Panc1 (cell line): ENCODE measurements at regions of chr2 and their contacts with region 1.

Region 1: DNA sequence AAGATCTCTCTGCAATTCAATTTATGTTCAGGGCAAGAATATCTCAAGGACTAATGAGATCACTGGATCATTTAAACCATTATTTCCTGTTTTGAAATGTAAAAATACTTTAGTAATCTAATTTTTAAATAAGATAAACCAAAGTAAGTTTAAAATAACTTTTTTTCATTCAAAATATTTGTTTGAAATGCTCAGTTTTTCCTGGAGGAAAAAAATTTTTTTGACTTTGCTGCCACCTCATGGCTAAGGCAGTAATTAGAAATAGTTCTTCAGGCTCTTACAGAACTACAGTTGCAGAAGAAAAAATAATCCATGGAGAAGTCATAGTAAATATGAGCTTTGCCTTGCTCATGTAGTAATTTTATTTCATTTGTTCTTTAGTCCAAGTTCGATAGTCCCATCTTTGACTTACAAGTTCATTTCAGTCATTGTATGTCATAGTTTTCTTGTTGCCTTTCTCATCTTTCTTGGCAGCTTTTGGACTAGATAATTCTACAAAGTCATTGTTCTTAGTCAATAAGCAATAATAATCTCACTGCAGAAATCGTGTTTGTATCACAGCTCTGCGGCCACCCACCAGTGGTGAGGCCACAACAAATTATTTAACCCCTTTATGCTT is 127.4 kb downstream of the DPP4 start:
- DNase-seq: peak; percentile 25
- ATAC-seq: no peak
- H3K4me3 ChIP-seq: no peak overlapping the region
- H3K27ac ChIP-seq: no peak overlapping the region
- H3K4me1 ChIP-seq: no peaks in the 10 kb centered on the region
- H3K27me3 ChIP-seq: no peaks in the 10 kb centered on the region; the same call in 1 of the 2 replicates
- CTCF ChIP-seq: peak; percentile 52; the same call in 1 of the 2 replicates

Region 2: GRCh38 chr2:161250864-161251436 is 695.6 kb before region 1 on chr2:
- CTCF ChIA-PET with region 1: no interaction called
- POLR2A ChIA-PET with region 1: no interaction called
- in situ Hi-C with region 1: no loop called
- intact Hi-C with region 1: loop called (anchors 2 kb)
- DNase-seq: peak; percentile 45
- ATAC-seq: peak; percentile 96
- H3K4me3 ChIP-seq: no peak overlapping the region
- H3K27ac ChIP-seq: no peak overlapping the region
- H3K4me1 ChIP-seq: no peaks in the 10 kb centered on the region
- H3K27me3 ChIP-seq: peaks cover 4% of the 10 kb centered on the region
- CTCF ChIP-seq: peak; percentile 75; the same call in 1 of the 2 replicates

Region 3: DNA sequence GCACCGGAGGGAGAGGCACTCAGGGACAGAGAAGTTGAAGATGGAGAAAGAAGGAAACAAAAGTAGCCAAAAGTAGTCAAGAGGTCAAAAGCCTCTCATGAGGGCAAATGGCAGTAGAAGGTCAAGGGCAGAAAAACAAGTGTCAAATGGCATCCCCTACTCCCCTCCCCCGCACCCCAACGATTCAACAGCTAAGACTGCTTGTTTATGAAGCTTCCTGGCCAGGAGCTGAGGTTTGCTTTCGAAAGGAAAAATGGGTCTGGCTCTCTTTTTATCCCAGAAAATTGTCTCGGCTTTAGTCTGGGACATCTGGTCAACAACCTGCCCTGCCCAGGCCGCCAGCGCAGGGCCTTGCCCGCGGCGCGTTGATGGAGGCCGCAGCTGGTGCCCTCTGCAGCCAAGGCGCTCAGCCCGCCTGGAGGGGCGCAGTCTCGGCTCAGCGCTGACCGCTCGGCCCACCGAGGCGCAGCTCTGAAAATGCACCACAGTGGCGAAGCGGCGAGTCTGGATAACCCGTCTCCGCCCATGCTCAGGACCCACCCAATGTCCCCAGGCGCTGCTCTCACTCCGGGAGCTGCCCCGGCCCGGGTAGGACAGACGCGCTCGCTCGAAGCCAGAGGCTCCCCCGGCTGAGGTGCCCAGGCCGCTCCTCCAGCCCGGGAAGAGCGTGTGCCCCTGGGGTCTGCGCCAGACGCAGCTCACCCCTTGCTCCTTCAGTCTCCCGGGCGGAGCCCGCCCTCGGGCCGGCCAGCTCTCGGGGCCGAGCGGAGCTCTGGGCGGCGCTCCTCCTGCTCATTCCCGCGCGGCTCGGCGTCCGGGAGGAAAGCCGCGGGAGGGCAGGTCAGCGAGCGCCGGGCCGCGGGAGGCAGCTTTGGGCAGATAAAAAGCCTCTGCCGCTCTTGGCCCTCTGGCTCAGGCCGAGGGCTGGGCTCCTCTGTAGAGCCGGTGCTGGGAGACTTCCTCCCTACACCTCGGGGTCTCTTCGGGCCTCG is 532.3 kb before region 1 on chr2:
- CTCF ChIA-PET with region 1: no interaction called
- POLR2A ChIA-PET with region 1: no interaction called
- in situ Hi-C with region 1: no loop called
- intact Hi-C with region 1: loop called (anchors 10 kb)
- DNase-seq: no peak
- ATAC-seq: peak; percentile 81
- H3K4me3 ChIP-seq: peak overlapping the region; percentile 44 to 56
- H3K27ac ChIP-seq: no peak overlapping the region
- H3K4me1 ChIP-seq: peaks cover 20% of the 10 kb centered on the region
- H3K27me3 ChIP-seq: peaks cover 23% of the 10 kb centered on the region
- CTCF ChIP-seq: peak; percentile 35

Region 4: GRCh38 chr2:161586517-161587167 is 360.0 kb before region 1 on chr2:
- CTCF ChIA-PET with region 1: interaction called, 4 read pairs
- POLR2A ChIA-PET with region 1: no interaction called
- in situ Hi-C with region 1: no loop called
- intact Hi-C with region 1: loop called (anchors 1 kb)
- DNase-seq: peak; percentile 17
- ATAC-seq: peak; percentile 62; the same call in 1 of the 2 replicates
- H3K4me3 ChIP-seq: no peak overlapping the region
- H3K27ac ChIP-seq: no peak overlapping the region
- H3K4me1 ChIP-seq: no peaks in the 10 kb centered on the region
- H3K27me3 ChIP-seq: no peaks in the 10 kb centered on the region
- CTCF ChIP-seq: peak; percentile 75; the same call in 1 of the 2 replicates

Region 5: GRCh38 chr2:162022290-162022945 is 75.8 kb after region 1 on chr2:
- CTCF ChIA-PET with region 1: no interaction called
- POLR2A ChIA-PET with region 1: no interaction called
- in situ Hi-C with region 1: no loop called
- intact Hi-C with region 1: no loop called
- DNase-seq: no peak
- ATAC-seq: no peak
- H3K4me3 ChIP-seq: no peak overlapping the region
- H3K27ac ChIP-seq: no peak overlapping the region
- H3K4me1 ChIP-seq: no peaks in the 10 kb centered on the region
- H3K27me3 ChIP-seq: no peaks in the 10 kb centered on the region
- CTCF ChIP-seq: no peak